Vagina (tissue), 2 donors: ENCODE measurements at regions of chr3 and their contacts with region 1.

Region 1: GRCh38 chr3:124032648-124033359 is 40.9 kb upstream of the ROPN1 start:
- DNase-seq: no peak
- H3K4me3 ChIP-seq: peak overlapping the region; percentile 66 to 78
- H3K27ac ChIP-seq: peak overlapping the region; percentile 71
- H3K4me1 ChIP-seq: peaks cover 15% of the 10 kb centered on the region
- H3K27me3 ChIP-seq: no peaks in the 10 kb centered on the region
- CTCF ChIP-seq: peak in 2 of 3 experiments; percentile 37 to 67
- POLR2A ChIP-seq: no peak

Region 2: GRCh38 chr3:124248471-124249028 is 215.7 kb after region 1 on chr3:
- intact Hi-C with region 1: loop called (anchors 1 kb)
- DNase-seq: no peak
- H3K4me3 ChIP-seq: no peak overlapping the region
- H3K27ac ChIP-seq: peak overlapping the region; percentile 78
- H3K4me1 ChIP-seq: peaks cover 26% of the 10 kb centered on the region
- H3K27me3 ChIP-seq: no peaks in the 10 kb centered on the region
- CTCF ChIP-seq: no peak
- POLR2A ChIP-seq: no peak

Region 3: DNA sequence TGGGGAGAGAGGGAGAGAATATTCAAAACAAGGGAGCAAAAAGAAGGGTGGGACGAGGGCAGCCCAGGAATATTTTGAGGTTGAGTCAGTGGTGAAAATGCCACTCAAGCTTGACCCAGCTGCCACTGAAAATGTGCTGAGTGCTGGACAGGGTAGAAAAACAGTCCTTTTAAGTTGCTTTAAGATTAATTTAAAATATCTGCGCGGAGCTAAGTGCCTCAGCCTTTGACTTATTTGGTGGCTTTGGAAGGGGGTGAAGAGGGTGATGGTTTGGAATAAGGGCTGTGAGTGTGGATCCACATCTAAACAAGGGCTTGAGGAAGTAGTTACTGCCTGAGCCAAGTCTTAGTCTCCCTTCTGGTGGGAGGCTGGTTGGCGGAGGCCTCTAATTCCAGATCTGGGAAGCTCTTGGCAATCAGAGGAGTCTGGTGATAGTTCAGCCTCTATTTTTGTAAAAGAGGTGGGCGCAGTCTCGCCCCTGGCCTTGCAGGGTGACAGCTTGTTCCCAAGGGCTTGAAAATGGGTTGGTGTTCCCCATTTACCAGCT is 239.9 kb after region 1 on chr3:
- intact Hi-C with region 1: loop called (anchors 2 kb)
- DNase-seq: no peak
- H3K4me3 ChIP-seq: no peak overlapping the region
- H3K27ac ChIP-seq: peak overlapping the region; percentile 57
- H3K4me1 ChIP-seq: peaks cover 42% of the 10 kb centered on the region
- H3K27me3 ChIP-seq: no peaks in the 10 kb centered on the region
- CTCF ChIP-seq: no peak
- POLR2A ChIP-seq: no peak